Activated naive CD4-positive, alpha-beta T cell treated with anti-CD3 and anti-CD28 coated beads for 36 hours (primary cell): ENCODE measurements at regions of chr10 and their contacts with region 1.

Region 1: GRCh38 chr10:100697070-100697469 is 48.3 kb upstream of the PAX2 start:
- DNase-seq: peak; percentile 71
- H3K4me3 Mint-ChIP-seq: no peak overlapping the region
- H3K27ac Mint-ChIP-seq: peak overlapping the region; percentile 36
- H3K4me1 Mint-ChIP-seq: peaks cover 11% of the 10 kb centered on the region
- H3K27me3 Mint-ChIP-seq: peaks cover 17% of the 10 kb centered on the region

Region 2: DNA sequence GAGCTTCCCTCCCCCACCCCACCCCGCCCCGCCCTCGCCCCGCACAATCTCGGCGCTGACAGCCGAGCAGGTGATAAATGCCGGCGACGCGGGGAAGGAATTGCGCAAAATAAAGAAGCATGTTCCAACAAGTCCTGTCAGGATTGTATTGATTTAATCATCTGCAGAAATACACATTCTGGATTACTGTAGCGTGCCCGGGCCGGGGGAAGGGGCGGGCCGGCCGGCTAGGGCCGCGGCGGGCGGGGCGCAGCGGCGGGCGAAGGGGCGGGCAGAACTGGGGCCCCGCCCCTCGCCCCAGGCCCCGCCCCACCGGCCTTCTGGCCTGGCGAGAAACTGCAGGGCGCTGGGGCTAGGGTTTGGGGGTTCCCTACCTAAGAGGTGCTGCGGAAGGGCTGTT is 40.6 kb before region 1 on chr10:
- CTCF ChIA-PET with region 1: no interaction called
- intact Hi-C with region 1: no loop called
- DNase-seq: peak; percentile 31
- H3K4me3 Mint-ChIP-seq: no peak overlapping the region
- H3K27ac Mint-ChIP-seq: no peak overlapping the region
- H3K4me1 Mint-ChIP-seq: peaks cover 24% of the 10 kb centered on the region
- H3K27me3 Mint-ChIP-seq: peaks cover 71% of the 10 kb centered on the region

Region 3: DNA sequence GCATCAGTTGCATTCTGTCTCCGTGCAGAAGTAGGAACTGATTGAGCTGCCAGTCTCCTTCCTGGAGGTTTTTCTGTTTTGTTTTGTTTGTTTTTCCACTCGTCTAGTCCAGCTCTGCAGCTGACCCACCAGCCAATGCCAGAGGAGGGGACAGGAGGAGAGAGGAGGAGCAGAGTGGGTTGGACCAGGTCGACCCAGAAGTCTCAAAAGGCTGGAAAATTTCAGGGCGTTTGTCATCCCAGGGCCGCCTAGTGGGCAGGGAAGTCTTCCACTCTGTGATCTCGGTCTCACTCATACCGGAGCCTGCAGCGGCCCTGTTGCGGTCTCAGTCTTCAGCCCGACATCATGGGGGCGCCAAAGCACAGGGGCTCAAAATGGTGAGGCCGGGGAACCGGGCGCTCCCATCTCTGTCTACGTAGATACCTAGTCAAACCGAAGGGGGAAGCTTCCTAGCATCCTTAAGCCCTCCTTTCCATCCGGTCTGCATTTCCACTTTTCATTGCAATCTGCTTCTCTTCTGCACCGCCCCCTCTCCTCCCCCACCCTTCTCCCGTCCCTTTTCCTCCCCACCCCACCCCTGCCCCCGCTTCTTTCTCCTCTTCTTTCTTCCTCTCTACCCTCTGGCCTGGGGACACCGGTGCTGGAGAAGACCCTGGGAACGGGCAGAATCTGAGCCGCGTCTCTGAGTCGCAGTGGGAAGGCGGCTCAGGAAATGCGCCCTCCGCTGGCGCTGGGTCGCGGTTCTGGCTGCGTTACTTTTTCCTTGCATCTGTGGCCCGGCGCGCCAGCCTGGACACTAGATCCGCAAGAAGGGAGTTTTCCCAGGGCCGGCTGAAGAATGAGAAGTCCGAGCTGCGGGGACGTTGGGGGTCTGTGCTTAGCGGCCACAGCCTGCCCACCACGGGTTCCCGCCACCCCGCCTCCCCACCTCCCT is 32.1 kb after region 1 on chr10:
- CTCF ChIA-PET with region 1: interaction called, 3 read pairs
- intact Hi-C with region 1: loop called (anchors 2 kb)
- DNase-seq: peak; percentile 65
- H3K4me3 Mint-ChIP-seq: peak overlapping the region; percentile 22
- H3K27ac Mint-ChIP-seq: no peak overlapping the region
- H3K4me1 Mint-ChIP-seq: peaks cover 21% of the 10 kb centered on the region
- H3K27me3 Mint-ChIP-seq: peaks cover 80% of the 10 kb centered on the region